ENCODE measurements at regions of chr1 and their contacts with region 1.

Region 1: DNA sequence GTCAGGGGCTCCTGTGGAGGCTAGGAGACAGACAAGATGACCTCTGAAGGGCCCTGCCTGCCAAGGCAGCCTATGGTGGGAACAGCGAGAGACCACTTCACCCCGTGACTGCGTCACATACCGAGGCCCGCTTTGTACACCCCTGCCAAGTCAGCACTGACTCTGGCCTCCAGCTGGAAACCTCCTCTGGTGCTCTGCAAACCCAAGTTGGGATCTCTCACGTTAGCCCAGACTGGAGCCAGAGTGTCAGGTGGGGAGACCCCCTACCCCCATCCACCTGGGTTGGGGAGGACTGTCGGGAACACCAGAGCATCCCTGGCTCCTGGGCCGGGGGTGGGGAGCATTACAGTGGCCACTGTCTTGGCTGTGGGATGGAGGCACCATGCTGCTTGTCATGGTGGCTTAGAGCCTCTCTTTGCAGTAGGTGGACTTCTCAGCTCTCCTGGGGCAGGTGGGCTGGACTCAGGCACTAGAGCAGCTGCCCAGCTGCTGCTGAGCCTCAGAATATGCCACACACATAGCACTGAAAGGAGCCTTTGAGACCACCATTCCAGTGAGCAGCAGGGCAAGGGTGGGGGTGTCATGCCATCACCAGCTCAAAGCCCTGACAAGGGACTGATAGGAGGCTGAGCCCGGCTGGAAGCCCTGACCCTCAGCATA is 50.4 kb downstream of the ELK4 start:
- DNase-seq: no peak
- H3K4me3 ChIP-seq: no peak overlapping the region
- H3K27ac ChIP-seq: no peak overlapping the region
- H3K4me1 ChIP-seq: peaks cover 8% of the 10 kb centered on the region
- H3K27me3 ChIP-seq: peaks cover 28% of the 10 kb centered on the region
- CTCF ChIP-seq: no peak

Region 2: GRCh38 chr1:205091043-205091740 is 490.3 kb before region 1 on chr1:
- CTCF ChIA-PET with region 1: no interaction called
- POLR2A ChIA-PET with region 1: no interaction called
- intact Hi-C with region 1: no loop called
- DNase-seq: no peak
- H3K4me3 ChIP-seq: no peak overlapping the region
- H3K27ac ChIP-seq: no peak overlapping the region
- H3K4me1 ChIP-seq: no peaks in the 10 kb centered on the region
- H3K27me3 ChIP-seq: no peaks in the 10 kb centered on the region
- CTCF ChIP-seq: no peak

Region 3: DNA sequence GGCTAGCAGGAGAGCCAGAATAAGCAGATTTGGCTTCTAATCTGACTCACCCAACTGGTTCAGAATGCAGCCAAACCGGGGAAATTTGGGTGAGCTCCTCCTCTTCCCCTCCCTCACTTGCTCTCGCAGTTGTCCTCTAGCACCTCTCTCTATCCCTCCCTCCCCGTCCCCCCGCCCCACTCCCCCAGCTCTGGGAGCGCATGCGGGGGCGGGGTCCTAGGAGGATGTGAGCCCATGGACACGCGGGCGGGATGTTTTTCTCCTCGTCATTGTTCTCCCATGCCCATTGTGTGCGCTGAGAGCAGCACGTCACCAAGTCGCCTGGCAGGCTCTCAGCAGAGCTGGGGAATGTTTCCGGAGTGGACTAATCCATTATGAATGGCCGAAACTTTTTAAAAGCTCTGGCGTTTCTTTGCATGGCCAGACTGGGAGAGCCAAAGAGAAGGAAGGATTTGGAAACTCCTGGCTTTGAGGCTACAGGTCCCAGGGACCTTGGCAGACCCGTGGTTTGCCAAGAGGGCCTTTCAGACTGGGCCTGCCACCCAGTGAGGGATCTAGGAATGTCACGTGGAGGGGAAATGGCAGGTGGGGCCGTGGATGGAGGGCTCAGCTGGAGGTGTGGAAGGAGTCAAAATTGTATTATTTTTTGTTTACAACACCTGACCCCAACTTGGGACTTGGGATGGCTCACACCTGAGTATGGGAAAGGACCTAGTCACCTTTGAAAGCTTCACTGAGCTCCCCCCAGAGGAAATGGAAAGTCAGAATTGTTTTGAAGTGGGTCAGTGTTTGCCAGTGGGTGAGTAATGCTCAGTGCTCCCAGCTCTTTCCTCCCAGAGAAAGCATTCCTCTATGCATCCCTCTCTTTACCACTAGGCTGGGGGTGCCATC is 37.8 kb before region 1 on chr1:
- CTCF ChIA-PET with region 1: no interaction called
- POLR2A ChIA-PET with region 1: interaction called, 13 read pairs
- intact Hi-C with region 1: no loop called
- DNase-seq: peak; percentile 89
- H3K4me3 ChIP-seq: peak overlapping the region; percentile 31
- H3K27ac ChIP-seq: peak overlapping the region; percentile 45
- H3K4me1 ChIP-seq: peaks cover 11% of the 10 kb centered on the region
- H3K27me3 ChIP-seq: peaks cover 5% of the 10 kb centered on the region
- CTCF ChIP-seq: no peak

Region 4: GRCh38 chr1:205689479-205689878 is 108.0 kb after region 1 on chr1:
- CTCF ChIA-PET with region 1: no interaction called
- POLR2A ChIA-PET with region 1: no interaction called
- intact Hi-C with region 1: no loop called
- DNase-seq: no peak
- H3K4me3 ChIP-seq: no peak overlapping the region
- H3K27ac ChIP-seq: no peak overlapping the region
- H3K4me1 ChIP-seq: peaks cover 6% of the 10 kb centered on the region
- H3K27me3 ChIP-seq: no peaks in the 10 kb centered on the region
- CTCF ChIP-seq: no peak

Region 5: DNA sequence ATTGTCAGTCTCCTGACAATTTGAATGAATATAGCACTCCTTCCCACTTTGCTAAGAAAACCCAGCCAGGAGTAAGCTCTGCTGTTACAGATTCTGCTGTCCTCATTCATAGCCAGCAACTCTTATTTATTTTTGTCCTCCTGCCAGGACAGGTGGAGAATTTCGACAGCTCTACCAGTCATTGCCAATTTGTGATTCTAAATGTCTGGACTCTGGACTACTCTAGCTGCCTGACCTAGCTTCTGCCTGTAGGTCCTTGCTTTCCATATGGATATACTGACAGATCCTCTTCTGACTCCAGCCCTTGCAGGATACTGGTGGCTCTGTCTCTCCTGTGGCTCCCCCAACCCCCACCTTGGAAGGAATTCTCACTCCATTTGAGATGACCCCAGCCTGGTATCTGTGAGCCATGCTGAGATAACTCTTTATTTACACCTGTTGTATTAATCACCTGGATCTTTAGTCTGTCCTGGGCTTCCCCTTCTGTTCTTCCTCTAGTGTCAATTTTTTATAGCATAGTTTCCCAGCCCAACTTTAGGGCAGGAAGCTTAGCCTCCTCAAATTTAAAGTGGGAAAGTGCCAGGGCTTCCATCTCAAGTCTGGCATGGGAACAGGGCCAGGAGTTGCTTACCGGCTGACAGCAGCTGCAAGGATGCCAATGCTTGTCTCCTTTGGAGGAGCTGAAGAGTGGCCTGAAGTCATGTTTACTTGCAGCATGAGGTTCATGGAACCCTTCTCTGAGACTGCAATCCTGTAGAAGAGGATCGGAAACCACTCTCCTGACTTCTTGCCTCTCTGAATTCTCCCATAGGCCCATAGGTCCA is 261.8 kb after region 1 on chr1:
- CTCF ChIA-PET with region 1: no interaction called
- POLR2A ChIA-PET with region 1: no interaction called
- intact Hi-C with region 1: no loop called
- DNase-seq: no peak
- H3K4me3 ChIP-seq: no peak overlapping the region
- H3K27ac ChIP-seq: no peak overlapping the region
- H3K4me1 ChIP-seq: no peaks in the 10 kb centered on the region
- H3K27me3 ChIP-seq: peaks cover under 1% of the 10 kb centered on the region
- CTCF ChIP-seq: no peak

Measured in A673 (cell line).